Dendritic cell treated with granulocyte-macrophage colony-stimulating factor and Interleukin-4, amounts not matched to agents 40 ng/mL and 50 ng/mL, for 4 days (primary cell): ENCODE measurements at regions of chr17 and their contacts with region 1.

Region 1: DNA sequence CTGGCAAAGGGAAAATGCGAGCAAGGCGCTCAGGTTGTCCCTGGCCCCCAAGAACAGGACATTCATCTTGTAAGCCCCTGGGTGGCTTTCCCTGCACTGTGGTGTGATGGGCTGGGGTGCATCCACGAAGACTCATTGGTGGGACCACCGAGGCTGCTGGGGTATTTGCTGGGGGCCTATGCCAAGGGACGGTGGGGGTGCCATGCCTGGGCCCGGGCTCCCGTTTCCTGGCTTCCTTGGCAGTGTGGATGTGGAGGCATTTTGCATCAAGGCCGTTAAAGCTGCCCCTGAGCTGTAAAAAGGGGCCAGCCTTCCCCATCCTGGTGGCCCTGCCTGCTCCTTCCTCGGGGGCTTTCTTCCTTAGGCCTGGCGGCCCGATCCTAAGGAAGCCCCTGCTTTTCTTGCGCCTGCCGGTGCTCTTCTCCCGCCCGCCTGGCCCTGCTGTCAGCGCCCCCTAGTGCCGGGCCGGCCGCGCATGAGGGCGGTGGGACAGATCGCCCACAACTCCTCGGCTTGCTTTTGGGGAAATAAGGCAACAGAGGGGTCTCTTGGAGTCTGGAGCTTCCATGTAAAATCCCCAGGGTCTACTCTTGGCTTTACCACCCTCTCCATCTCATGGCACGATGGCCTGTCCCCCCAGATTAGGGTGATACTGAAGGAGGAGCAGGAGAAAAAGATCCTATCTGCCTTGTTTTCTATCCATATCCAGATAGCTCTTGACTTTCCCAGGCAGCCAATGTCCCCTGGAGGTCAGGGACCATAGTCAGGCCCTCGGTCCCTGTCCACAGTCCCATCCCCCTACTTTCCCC is 9.8 kb upstream of the TBX2 start:
- H3K4me3 Mint-ChIP-seq: no peak overlapping the region
- H3K27ac Mint-ChIP-seq: no peak overlapping the region
- H3K4me1 Mint-ChIP-seq: no peaks in the 10 kb centered on the region
- H3K27me3 Mint-ChIP-seq: peaks cover 58% of the 10 kb centered on the region

Region 2: GRCh38 chr17:60720763-60721531 is 668.9 kb before region 1 on chr17:
- intact Hi-C with region 1: loop called (anchors 5 kb)
- H3K4me3 Mint-ChIP-seq: no peak overlapping the region
- H3K27ac Mint-ChIP-seq: no peak overlapping the region
- H3K4me1 Mint-ChIP-seq: no peaks in the 10 kb centered on the region
- H3K27me3 Mint-ChIP-seq: peaks cover 2% of the 10 kb centered on the region

Region 3: GRCh38 chr17:61002316-61002736 is 387.5 kb before region 1 on chr17:
- intact Hi-C with region 1: loop called (anchors 5 kb)
- H3K4me3 Mint-ChIP-seq: no peak overlapping the region
- H3K27ac Mint-ChIP-seq: no peak overlapping the region
- H3K4me1 Mint-ChIP-seq: no peaks in the 10 kb centered on the region
- H3K27me3 Mint-ChIP-seq: no peaks in the 10 kb centered on the region

Region 4: GRCh38 chr17:61361084-61361483 is 28.8 kb before region 1 on chr17:
- intact Hi-C with region 1: no loop called
- H3K4me3 Mint-ChIP-seq: no peak overlapping the region
- H3K27ac Mint-ChIP-seq: no peak overlapping the region
- H3K4me1 Mint-ChIP-seq: no peaks in the 10 kb centered on the region
- H3K27me3 Mint-ChIP-seq: no peaks in the 10 kb centered on the region